ENCODE measurements at regions of chr5 and their contacts with region 1.

Region 1: GRCh38 chr5:33440482-33441240 is at the start of gene TARS1:
- DNase-seq: peak; percentile 86 to 97 (median 96)
- H3K4me3 ChIP-seq: peak within 1 kb of the TSS; percentile 58 to 98 (median 86)
- H3K27ac ChIP-seq: peak within 1 kb of the TSS; percentile 13 to 98 (median 90)
- H3K27me3 ChIP-seq: no peaks in the 10 kb centered on the region
- CTCF ChIP-seq: peak in 24 of 56 donors; percentile 3 to 53 (median 14)
- total RNA-seq, gene TARS1: 34.6 to 97.2 (median 51.4) TPM

Region 2: GRCh38 chr5:33530183-33531036 is 89.7 kb after region 1 on chr5:
- intact Hi-C with region 1: loop called in 1 of 2 experiments (anchors 2 kb)
- DNase-seq: no peak
- H3K4me3 ChIP-seq: no peak overlapping the region
- H3K27ac ChIP-seq: no peak overlapping the region
- H3K27me3 ChIP-seq: peaks cover 0 to 3% (median 0%) of the 10 kb centered on the region in 45 donors
- CTCF ChIP-seq: no peak

Region 3: DNA sequence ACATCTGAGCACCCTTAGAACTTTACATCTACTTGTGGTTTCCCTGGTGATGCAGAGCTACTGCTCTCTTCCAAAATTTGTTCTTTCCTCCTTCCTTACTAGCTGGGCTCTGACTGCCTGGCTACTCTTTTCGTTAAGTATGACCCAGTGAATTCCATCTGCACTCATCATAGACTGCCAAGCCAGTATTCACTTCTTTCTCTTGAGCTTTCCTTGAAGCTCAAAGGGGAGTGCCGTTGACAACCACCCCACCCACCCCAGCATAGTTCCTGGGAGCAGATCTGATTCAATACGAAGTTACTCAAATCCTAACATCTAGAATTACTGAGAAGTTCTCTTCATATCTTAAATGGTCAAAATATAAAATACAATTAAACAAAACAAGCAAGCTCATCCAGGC is 260.6 kb after region 1 on chr5:
- intact Hi-C with region 1: no loop called
- DNase-seq: no peak
- H3K4me3 ChIP-seq: no peak overlapping the region
- H3K27ac ChIP-seq: no peak overlapping the region
- H3K27me3 ChIP-seq: no peaks in the 10 kb centered on the region
- CTCF ChIP-seq: no peak

Region 4: GRCh38 chr5:33936004-33936380 is 495.3 kb after region 1 on chr5:
- intact Hi-C with region 1: loop called (anchors 2 to 5 kb)
- DNase-seq: peak in 5 of 10 donors; percentile 38 to 65 (median 48)
- H3K4me3 ChIP-seq: peak overlapping the region in 58 of 59 donors; percentile 13 to 62 (median 41)
- H3K27ac ChIP-seq: no peak overlapping the region
- H3K27me3 ChIP-seq: peaks cover 4 to 76% (median 42%) of the 10 kb centered on the region in 45 donors
- CTCF ChIP-seq: peak in 46 of 56 donors; percentile 11 to 57 (median 38)

Region 5: DNA sequence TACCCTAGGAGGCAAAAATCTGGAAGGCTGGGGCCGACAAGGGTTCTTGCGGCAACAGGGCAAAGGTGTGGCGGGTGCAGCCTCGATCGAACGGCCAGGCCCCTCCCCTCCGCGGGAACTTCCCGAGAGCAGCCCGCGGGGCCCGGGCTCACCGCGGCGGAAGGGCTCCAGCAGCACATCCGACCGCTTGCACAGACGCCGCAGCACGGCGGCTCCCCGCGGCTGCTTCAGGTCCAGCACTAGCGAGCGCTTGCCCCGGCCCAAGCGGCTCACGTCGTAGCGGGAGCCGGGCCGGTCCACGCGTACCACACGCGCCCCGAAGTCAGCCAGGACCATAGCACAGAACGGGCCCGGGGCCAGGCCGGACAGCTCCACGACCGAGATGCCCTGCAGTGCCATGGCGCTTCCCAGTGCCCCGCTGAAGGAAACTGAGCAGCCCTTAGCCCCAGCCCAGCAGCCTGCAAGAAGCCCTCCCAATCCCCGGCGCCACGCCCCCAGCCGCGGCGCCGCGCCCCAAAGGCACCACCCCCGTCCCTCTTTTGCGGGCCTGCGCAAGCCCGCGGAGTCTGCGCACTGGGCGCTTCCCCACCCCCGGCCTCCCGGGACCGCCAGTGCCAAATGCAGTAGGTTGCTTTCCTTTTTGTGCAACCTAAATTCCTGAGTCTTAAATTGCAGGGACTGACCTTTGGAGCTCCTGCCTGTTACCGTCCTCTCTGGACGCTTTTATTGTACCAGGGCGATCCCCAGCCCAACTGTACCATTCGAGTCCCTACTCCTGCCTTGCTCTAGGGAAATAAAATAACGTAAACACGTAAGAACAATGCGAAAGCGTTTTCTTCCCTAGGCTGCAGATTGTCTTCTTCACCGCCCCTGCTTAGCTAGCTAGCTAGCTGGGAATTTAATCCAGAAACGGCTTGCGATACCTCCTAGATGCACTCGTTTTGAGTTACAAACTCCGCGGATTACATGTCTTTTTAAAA is 567.2 kb after region 1 on chr5 and contains the start of gene AMACR:
- intact Hi-C with region 1: loop called (anchors 2 to 5 kb)
- DNase-seq: peak; percentile 71 to 95 (median 90)
- H3K4me3 ChIP-seq: peak within 1 kb of the TSS; percentile 58 to 96 (median 79)
- H3K27ac ChIP-seq: peak within 1 kb of the TSS; percentile 75 to 99 (median 97)
- H3K27me3 ChIP-seq: no peaks in the 10 kb centered on the region
- CTCF ChIP-seq: peak in 29 of 56 donors; percentile 4 to 45 (median 17)
- total RNA-seq, gene AMACR: 5.2 to 32.6 (median 16.9) TPM

Region 6: DNA sequence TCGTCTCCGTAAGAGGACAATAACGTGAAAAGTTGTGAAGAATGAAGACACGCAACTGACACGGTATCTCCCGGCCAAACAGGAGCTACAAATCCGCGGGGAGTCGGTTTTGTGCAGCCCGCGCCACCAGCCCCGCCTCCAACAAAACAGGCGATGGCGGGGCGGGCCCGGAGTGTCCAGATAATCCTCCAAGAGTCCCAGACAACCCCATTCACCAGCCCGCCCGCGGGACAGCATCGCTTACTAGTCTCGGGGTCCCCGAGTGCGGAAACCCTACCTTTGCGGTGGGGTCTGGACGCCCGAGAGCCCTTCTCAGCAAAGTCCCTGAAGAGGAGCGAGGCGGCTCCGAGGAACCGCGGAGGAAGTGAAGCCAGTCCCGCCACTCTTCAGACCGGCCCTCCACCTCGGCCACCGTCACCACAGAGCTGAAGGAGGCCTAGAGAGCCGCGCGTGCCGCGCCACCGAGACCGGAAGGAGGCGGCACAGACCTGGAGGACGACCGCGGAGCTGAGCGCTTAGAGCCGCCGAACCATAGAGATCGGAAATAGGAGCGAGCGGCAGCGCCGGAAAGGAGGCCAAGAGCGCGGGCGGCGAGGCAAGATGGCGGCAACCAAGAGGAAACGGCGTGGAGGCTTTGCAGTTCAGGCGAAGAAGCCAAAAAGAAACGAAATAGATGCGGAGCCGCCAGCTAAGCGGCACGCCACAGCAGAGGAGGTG is 1474.6 kb after region 1 on chr5 and contains the starts of genes BRIX1 and RAD1:
- intact Hi-C with region 1: loop called in 1 of 2 experiments (anchors 10 kb)
- DNase-seq: peak; percentile 93 to 98 (median 97)
- H3K4me3 ChIP-seq: peak within 1 kb of the TSS; percentile 65 to 100 (median 94)
- H3K27ac ChIP-seq: peak within 1 kb of the TSS; percentile 22 to 96 (median 86)
- H3K27me3 ChIP-seq: no peaks in the 10 kb centered on the region
- CTCF ChIP-seq: peak in 55 of 56 donors; percentile 14 to 69 (median 46)
- total RNA-seq, gene BRIX1: 9.9 to 27.7 (median 18.0) TPM
- total RNA-seq, gene RAD1: 11.2 to 31.2 (median 21.8) TPM